Activated CD4-positive, alpha-beta memory T cell treated with anti-CD3 and anti-CD28 coated beads for 36 hours (primary cell): ENCODE measurements at regions of chr16 and their contacts with region 1.

Region 1: GRCh38 chr16:23924128-23924527 is 88.3 kb downstream of the PRKCB start:
- DNase-seq: peak; percentile 30
- H3K4me3 Mint-ChIP-seq: no peak overlapping the region
- H3K27ac Mint-ChIP-seq: no peak overlapping the region
- H3K4me1 Mint-ChIP-seq: peaks cover 59% of the 10 kb centered on the region
- H3K27me3 Mint-ChIP-seq: no peaks in the 10 kb centered on the region

Region 2: DNA sequence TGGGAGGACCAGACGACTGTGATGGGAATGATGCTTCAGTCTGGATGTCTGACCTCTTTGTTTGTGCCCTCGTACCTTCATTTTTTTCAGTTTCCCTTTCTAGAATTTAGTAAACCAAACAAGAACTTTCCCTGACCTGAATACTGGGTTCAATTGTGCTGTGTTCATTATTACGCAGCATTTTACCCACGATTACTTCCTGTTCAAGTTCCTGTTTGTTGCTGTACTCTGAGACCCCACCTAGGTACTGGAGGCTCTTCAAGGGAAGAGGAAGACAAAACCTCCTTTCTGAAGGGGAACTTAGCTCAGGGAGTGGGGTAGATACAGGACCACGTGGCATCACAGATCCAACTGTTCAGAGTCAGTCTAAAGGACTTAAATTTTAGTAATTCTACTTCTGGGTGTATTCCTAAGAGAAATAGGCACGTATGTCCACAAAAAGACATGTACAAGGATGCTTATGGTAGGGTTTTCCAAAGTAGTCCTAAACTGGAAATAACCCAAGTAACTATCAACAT is 97.5 kb before region 1 on chr16:
- CTCF ChIA-PET with region 1: no interaction called
- POLR2A ChIA-PET with region 1: no interaction called
- intact Hi-C with region 1: loop called (anchors 2 kb)
- DNase-seq: no peak
- H3K4me3 Mint-ChIP-seq: peak overlapping the region; percentile 43
- H3K27ac Mint-ChIP-seq: peak overlapping the region; percentile 62
- H3K4me1 Mint-ChIP-seq: peaks cover 20% of the 10 kb centered on the region
- H3K27me3 Mint-ChIP-seq: no peaks in the 10 kb centered on the region

Region 3: GRCh38 chr16:23877107-23878090 is 46.7 kb before region 1 on chr16:
- CTCF ChIA-PET with region 1: no interaction called
- POLR2A ChIA-PET with region 1: interaction called, 7 read pairs
- intact Hi-C with region 1: loop called (anchors 5 kb)
- DNase-seq: peak; percentile 65
- H3K4me3 Mint-ChIP-seq: no peak overlapping the region
- H3K27ac Mint-ChIP-seq: peak overlapping the region; percentile 49
- H3K4me1 Mint-ChIP-seq: peaks cover 73% of the 10 kb centered on the region
- H3K27me3 Mint-ChIP-seq: no peaks in the 10 kb centered on the region

Region 4: GRCh38 chr16:23952128-23952970 is 28.2 kb after region 1 on chr16:
- CTCF ChIA-PET with region 1: no interaction called
- POLR2A ChIA-PET with region 1: no interaction called
- intact Hi-C with region 1: loop called (anchors 1 kb)
- DNase-seq: peak; percentile 59
- H3K4me3 Mint-ChIP-seq: peak overlapping the region; percentile 22
- H3K27ac Mint-ChIP-seq: peak overlapping the region; percentile 63
- H3K4me1 Mint-ChIP-seq: peaks cover 82% of the 10 kb centered on the region
- H3K27me3 Mint-ChIP-seq: no peaks in the 10 kb centered on the region

Region 5: GRCh38 chr16:23979441-23979840 is 55.3 kb after region 1 on chr16:
- CTCF ChIA-PET with region 1: no interaction called
- POLR2A ChIA-PET with region 1: no interaction called
- intact Hi-C with region 1: no loop called
- DNase-seq: no peak
- H3K4me3 Mint-ChIP-seq: no peak overlapping the region
- H3K27ac Mint-ChIP-seq: no peak overlapping the region
- H3K4me1 Mint-ChIP-seq: peaks cover 37% of the 10 kb centered on the region
- H3K27me3 Mint-ChIP-seq: no peaks in the 10 kb centered on the region